Activated naive CD4-positive, alpha-beta T cell treated with anti-CD3 and anti-CD28 coated beads for 36 hours (primary cell): ENCODE measurements at regions of chr18 and their contacts with region 1.

Region 1: DNA sequence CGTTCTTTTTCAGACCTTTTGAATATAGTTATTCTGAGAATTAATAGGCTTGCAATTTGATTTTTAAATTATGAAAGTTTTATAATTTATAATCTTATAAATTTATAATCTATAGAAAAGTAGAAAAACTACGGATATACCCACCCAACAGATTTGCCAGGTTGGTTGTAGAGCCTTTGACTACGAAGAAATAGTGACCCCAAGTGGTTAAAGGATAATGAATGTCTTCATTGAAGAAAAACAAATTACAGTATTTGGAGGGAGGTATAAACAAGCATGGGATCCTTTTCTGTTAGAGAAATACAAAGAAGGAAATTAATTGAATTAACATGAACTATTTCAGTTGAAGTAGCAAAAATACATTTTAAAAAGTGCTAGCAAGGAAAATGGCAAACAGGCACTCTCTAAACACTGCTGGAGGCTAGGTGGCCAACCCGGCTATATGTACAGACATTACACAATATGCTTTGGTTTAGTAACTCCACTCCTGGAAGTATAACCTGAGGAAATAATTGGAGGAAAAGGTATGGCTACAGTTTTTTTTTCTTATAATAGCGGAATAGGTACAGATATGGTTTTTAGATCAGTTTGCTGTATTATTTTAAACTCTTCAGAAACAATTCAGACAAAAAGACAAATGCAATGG is 110.9 kb downstream of the MIB1 start:
- DNase-seq: no peak
- H3K4me3 Mint-ChIP-seq: no peak overlapping the region
- H3K27ac Mint-ChIP-seq: no peak overlapping the region
- H3K4me1 Mint-ChIP-seq: peaks cover 6% of the 10 kb centered on the region
- H3K27me3 Mint-ChIP-seq: no peaks in the 10 kb centered on the region

Region 2: DNA sequence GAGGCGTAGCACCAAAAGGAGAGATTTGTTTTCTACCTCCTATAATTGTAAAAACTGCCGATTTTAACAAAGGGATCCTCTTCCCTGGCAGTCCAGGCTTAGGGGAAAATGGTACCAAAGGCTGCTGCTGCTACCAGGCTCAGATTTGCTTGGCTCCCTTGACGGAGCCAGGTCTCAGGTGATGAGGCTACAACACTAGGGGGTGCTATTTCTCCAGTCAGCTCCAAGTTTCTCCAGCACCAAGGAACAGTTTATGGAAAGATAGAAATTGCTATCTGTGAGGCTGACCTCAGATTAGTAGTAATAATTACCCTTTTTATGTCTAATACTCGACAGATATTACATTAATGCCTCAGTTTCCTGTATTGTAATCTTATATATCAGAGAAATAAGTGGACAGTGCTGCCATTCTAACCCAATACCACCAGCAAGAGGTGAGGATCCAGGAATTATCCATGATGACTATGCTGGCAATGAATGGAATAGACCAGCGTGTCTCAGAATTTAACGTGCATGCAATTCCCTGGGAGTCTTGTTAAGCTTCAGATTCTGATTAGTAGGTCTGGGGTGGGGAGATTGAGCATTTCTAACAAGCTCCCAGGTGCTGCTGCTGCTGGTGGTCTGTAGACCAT is 362.2 kb before region 1 on chr18:
- CTCF ChIA-PET with region 1: interaction called, 5 read pairs
- intact Hi-C with region 1: loop called (anchors 1 kb)
- DNase-seq: peak; percentile 52
- H3K4me3 Mint-ChIP-seq: no peak overlapping the region
- H3K27ac Mint-ChIP-seq: no peak overlapping the region
- H3K4me1 Mint-ChIP-seq: no peaks in the 10 kb centered on the region
- H3K27me3 Mint-ChIP-seq: peaks cover 6% of the 10 kb centered on the region

Region 3: GRCh38 chr18:21865043-21865442 is 13.6 kb after region 1 on chr18:
- CTCF ChIA-PET with region 1: no interaction called
- intact Hi-C with region 1: no loop called
- DNase-seq: no peak
- H3K4me3 Mint-ChIP-seq: no peak overlapping the region
- H3K27ac Mint-ChIP-seq: no peak overlapping the region
- H3K4me1 Mint-ChIP-seq: no peaks in the 10 kb centered on the region
- H3K27me3 Mint-ChIP-seq: no peaks in the 10 kb centered on the region

Region 4: DNA sequence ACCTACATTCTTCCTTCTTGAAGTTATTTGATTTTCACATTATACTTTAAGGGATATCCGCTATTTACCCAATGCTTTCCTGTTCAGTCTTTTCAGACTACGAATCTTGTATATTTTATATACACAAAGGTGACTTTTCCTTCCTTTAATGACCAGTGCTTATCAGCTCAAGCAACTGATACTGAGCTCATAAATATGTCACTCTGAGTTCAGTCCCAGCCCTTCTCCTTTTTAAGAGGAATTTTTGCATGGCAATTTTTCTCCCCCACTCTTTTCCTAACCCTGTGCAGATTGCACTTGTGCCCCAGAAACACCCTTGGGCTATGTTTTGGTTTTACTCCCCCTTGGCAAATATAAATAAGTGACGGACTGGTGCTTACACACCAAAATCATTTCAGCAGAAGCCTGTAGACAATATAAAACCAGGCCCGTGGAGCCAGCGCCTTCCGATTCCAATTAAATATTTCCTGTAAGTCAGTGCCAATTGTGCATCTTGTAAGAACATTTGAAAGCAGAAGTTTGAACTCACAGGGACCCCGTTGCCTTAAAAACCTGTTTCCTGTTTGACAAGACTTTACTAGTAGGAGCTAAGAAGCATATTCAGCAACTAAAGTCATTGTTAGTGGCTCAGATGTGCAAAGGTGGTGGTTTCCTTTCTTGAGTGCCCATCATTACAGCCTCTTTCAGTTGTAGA is 251.7 kb after region 1 on chr18:
- CTCF ChIA-PET with region 1: no interaction called
- intact Hi-C with region 1: no loop called
- DNase-seq: no peak
- H3K4me3 Mint-ChIP-seq: no peak overlapping the region
- H3K27ac Mint-ChIP-seq: no peak overlapping the region
- H3K4me1 Mint-ChIP-seq: no peaks in the 10 kb centered on the region
- H3K27me3 Mint-ChIP-seq: no peaks in the 10 kb centered on the region